Activated CD4-positive, alpha-beta T cell treated with anti-CD3 and anti-CD28 coated beads, Interleukin-2, amount 10 ng/mL, durations not matched to agents 7 days and 5 days (primary cell): ENCODE measurements at regions of chr2 and their contacts with region 1.

Region 1: GRCh38 chr2:174008271-174008670 is 43.1 kb upstream of the SP3 start:
- DNase-seq: no peak
- H3K4me3 Mint-ChIP-seq: no peak overlapping the region
- H3K27ac Mint-ChIP-seq: no peak overlapping the region
- H3K4me1 Mint-ChIP-seq: peaks cover 4% of the 10 kb centered on the region
- H3K27me3 Mint-ChIP-seq: peaks cover 5% of the 10 kb centered on the region

Region 2: GRCh38 chr2:174059178-174059874 is 51.1 kb after region 1 on chr2:
- CTCF ChIA-PET with region 1: no interaction called
- POLR2A ChIA-PET with region 1: interaction called, 11 read pairs
- DNase-seq: no peak
- H3K4me3 Mint-ChIP-seq: no peak overlapping the region
- H3K27ac Mint-ChIP-seq: no peak overlapping the region
- H3K4me1 Mint-ChIP-seq: no peaks in the 10 kb centered on the region
- H3K27me3 Mint-ChIP-seq: peaks cover 8% of the 10 kb centered on the region